ENCODE measurements at regions of chr7 and their contacts with region 1.

Region 1: GRCh38 chr7:25028370-25029021 is 48.5 kb upstream of the OSBPL3 start:
- DNase-seq: peak; percentile 54 to 78 (median 71)
- H3K4me3 ChIP-seq: no peak overlapping the region
- H3K4me3 Mint-ChIP-seq: peak overlapping the region in 7 of 8 donors; percentile 61 to 92 (median 78)
- H3K27ac ChIP-seq: peak overlapping the region; percentile 53
- H3K27ac Mint-ChIP-seq: peak overlapping the region; percentile 67 to 97 (median 94)
- H3K4me1 ChIP-seq: peaks cover 55% of the 10 kb centered on the region
- H3K4me1 Mint-ChIP-seq: peaks cover 25 to 78% (median 62%) of the 10 kb centered on the region in 4 donors
- H3K27me3 ChIP-seq: no peaks in the 10 kb centered on the region
- H3K27me3 Mint-ChIP-seq: peaks cover 0 to 1% of the 10 kb centered on the region in 2 donors

Region 2: GRCh38 chr7:25012254-25012653 is 16.2 kb before region 1 on chr7:
- CTCF ChIA-PET with region 1: interaction called, 7 read pairs
- POLR2A ChIA-PET with region 1: interaction called, 10 read pairs
- intact Hi-C with region 1: no loop called
- DNase-seq: no peak
- H3K4me3 ChIP-seq: no peak overlapping the region
- H3K4me3 Mint-ChIP-seq: no peak overlapping the region
- H3K27ac ChIP-seq: no peak overlapping the region
- H3K27ac Mint-ChIP-seq: no peak overlapping the region
- H3K4me1 ChIP-seq: no peaks in the 10 kb centered on the region
- H3K4me1 Mint-ChIP-seq: no peaks in the 10 kb centered on the region
- H3K27me3 ChIP-seq: no peaks in the 10 kb centered on the region
- H3K27me3 Mint-ChIP-seq: no peaks in the 10 kb centered on the region

Region 3: GRCh38 chr7:25148772-25149575 is 120.5 kb after region 1 on chr7:
- CTCF ChIA-PET with region 1: no interaction called
- POLR2A ChIA-PET with region 1: no interaction called
- intact Hi-C with region 1: no loop called
- DNase-seq: no peak
- H3K4me3 ChIP-seq: no peak overlapping the region
- H3K4me3 Mint-ChIP-seq: no peak overlapping the region
- H3K27ac ChIP-seq: no peak overlapping the region
- H3K27ac Mint-ChIP-seq: no peak overlapping the region
- H3K4me1 ChIP-seq: no peaks in the 10 kb centered on the region
- H3K4me1 Mint-ChIP-seq: no peaks in the 10 kb centered on the region
- H3K27me3 ChIP-seq: no peaks in the 10 kb centered on the region
- H3K27me3 Mint-ChIP-seq: no peaks in the 10 kb centered on the region

Region 4: GRCh38 chr7:25297278-25297677 is 268.8 kb after region 1 on chr7:
- CTCF ChIA-PET with region 1: no interaction called
- POLR2A ChIA-PET with region 1: no interaction called
- intact Hi-C with region 1: no loop called
- DNase-seq: no peak
- H3K4me3 ChIP-seq: no peak overlapping the region
- H3K4me3 Mint-ChIP-seq: no peak overlapping the region
- H3K27ac ChIP-seq: no peak overlapping the region
- H3K27ac Mint-ChIP-seq: no peak overlapping the region
- H3K4me1 ChIP-seq: no peaks in the 10 kb centered on the region
- H3K4me1 Mint-ChIP-seq: no peaks in the 10 kb centered on the region
- H3K27me3 ChIP-seq: no peaks in the 10 kb centered on the region
- H3K27me3 Mint-ChIP-seq: peaks cover 9% of the 10 kb centered on the region in 2 donors